Stomach (tissue), 19 donors: ENCODE measurements at regions of chr15 and their contacts with region 1.

Region 1: GRCh38 chr15:28132524-28133275 is 33.6 kb upstream of the OCA2 start:
- DNase-seq: no peak
- H3K4me3 ChIP-seq: no peak overlapping the region
- H3K27ac ChIP-seq: no peak overlapping the region
- H3K4me1 ChIP-seq: no peaks in the 10 kb centered on the region
- H3K27me3 ChIP-seq: no peaks in the 10 kb centered on the region
- CTCF ChIP-seq: no peak
- EP300 ChIP-seq: no peak
- POLR2A ChIP-seq: no peak

Region 2: GRCh38 chr15:27928386-27928785 is 204.3 kb before region 1 on chr15:
- intact Hi-C with region 1: no loop called
- DNase-seq: peak in 1 of 2 donors; percentile 32
- H3K4me3 ChIP-seq: no peak overlapping the region
- H3K27ac ChIP-seq: no peak overlapping the region
- H3K4me1 ChIP-seq: no peaks in the 10 kb centered on the region
- H3K27me3 ChIP-seq: no peaks in the 10 kb centered on the region
- CTCF ChIP-seq: no peak
- EP300 ChIP-seq: no peak
- POLR2A ChIP-seq: no peak

Region 3: GRCh38 chr15:28086175-28086703 is 46.5 kb before region 1 on chr15:
- intact Hi-C with region 1: loop called (anchors 10 kb)
- DNase-seq: peak; percentile 68 to 81
- H3K4me3 ChIP-seq: no peak overlapping the region
- H3K27ac ChIP-seq: no peak overlapping the region
- H3K4me1 ChIP-seq: no peaks in the 10 kb centered on the region
- H3K27me3 ChIP-seq: peaks cover 0 to 15% (median 2%) of the 10 kb centered on the region in 3 donors
- CTCF ChIP-seq: peak in 5 of 7 experiments; percentile 35 to 65 (median 57)
- EP300 ChIP-seq: no peak
- POLR2A ChIP-seq: no peak

Region 4: GRCh38 chr15:28273468-28273867 is 140.8 kb after region 1 on chr15:
- intact Hi-C with region 1: no loop called
- DNase-seq: peak in 1 of 2 donors; percentile 23
- H3K4me3 ChIP-seq: no peak overlapping the region
- H3K27ac ChIP-seq: no peak overlapping the region
- H3K4me1 ChIP-seq: no peaks in the 10 kb centered on the region
- H3K27me3 ChIP-seq: no peaks in the 10 kb centered on the region
- CTCF ChIP-seq: no peak
- EP300 ChIP-seq: no peak
- POLR2A ChIP-seq: no peak